Dorsolateral prefrontal cortex (tissue), 120 donors: ENCODE measurements at regions of chr4 and their contacts with region 1.

Region 1: GRCh38 chr4:24980064-24980690 is 50.6 kb downstream of the LGI2 start:
- DNase-seq: peak in 7 of 10 donors; percentile 35 to 68 (median 51)
- H3K4me3 ChIP-seq: peak overlapping the region in 58 of 59 donors; percentile 6 to 63 (median 36)
- H3K27ac ChIP-seq: peak overlapping the region in 49 of 59 donors; percentile 0 to 89 (median 66)
- H3K27me3 ChIP-seq: no peaks in the 10 kb centered on the region
- CTCF ChIP-seq: peak; percentile 67 to 96 (median 89)

Region 2: GRCh38 chr4:24713604-24714003 is 266.6 kb before region 1 on chr4:
- intact Hi-C with region 1: no loop called
- DNase-seq: no peak
- H3K4me3 ChIP-seq: no peak overlapping the region
- H3K27ac ChIP-seq: no peak overlapping the region
- H3K27me3 ChIP-seq: no peaks in the 10 kb centered on the region
- CTCF ChIP-seq: no peak

Region 3: GRCh38 chr4:24885342-24885741 is 94.8 kb before region 1 on chr4:
- intact Hi-C with region 1: no loop called
- DNase-seq: peak in 8 of 10 donors; percentile 37 to 80 (median 68)
- H3K4me3 ChIP-seq: peak overlapping the region in 30 of 59 donors; percentile 5 to 54 (median 28)
- H3K27ac ChIP-seq: peak overlapping the region in 6 of 59 donors; percentile 6 to 49 (median 28)
- H3K27me3 ChIP-seq: no peaks in the 10 kb centered on the region
- CTCF ChIP-seq: peak in 8 of 56 donors; percentile 9 to 19 (median 16)

Region 4: GRCh38 chr4:25030277-25031076 is 50.3 kb after region 1 on chr4 and contains the start of gene LGI2:
- intact Hi-C with region 1: loop called in 1 of 2 experiments (anchors 5 kb)
- DNase-seq: peak in 7 of 10 donors; percentile 21 to 72 (median 47)
- H3K4me3 ChIP-seq: peak within 1 kb of the TSS; percentile 42 to 79 (median 63)
- H3K27ac ChIP-seq: peak within 1 kb of the TSS in 27 of 59 donors; percentile 0 to 70 (median 43)
- H3K27me3 ChIP-seq: no peaks in the 10 kb centered on the region
- CTCF ChIP-seq: no peak
- total RNA-seq, gene LGI2: 1.4 to 14.5 (median 6.4) TPM

Region 5: GRCh38 chr4:25144870-25145481 is 164.8 kb after region 1 on chr4:
- intact Hi-C with region 1: loop called in 1 of 2 experiments (anchors 10 kb)
- DNase-seq: no peak
- H3K4me3 ChIP-seq: no peak overlapping the region
- H3K27ac ChIP-seq: no peak overlapping the region
- H3K27me3 ChIP-seq: no peaks in the 10 kb centered on the region
- CTCF ChIP-seq: peak; percentile 43 to 75 (median 59)